ENCODE measurements at regions of chr7 and their contacts with region 1.

Region 1: DNA sequence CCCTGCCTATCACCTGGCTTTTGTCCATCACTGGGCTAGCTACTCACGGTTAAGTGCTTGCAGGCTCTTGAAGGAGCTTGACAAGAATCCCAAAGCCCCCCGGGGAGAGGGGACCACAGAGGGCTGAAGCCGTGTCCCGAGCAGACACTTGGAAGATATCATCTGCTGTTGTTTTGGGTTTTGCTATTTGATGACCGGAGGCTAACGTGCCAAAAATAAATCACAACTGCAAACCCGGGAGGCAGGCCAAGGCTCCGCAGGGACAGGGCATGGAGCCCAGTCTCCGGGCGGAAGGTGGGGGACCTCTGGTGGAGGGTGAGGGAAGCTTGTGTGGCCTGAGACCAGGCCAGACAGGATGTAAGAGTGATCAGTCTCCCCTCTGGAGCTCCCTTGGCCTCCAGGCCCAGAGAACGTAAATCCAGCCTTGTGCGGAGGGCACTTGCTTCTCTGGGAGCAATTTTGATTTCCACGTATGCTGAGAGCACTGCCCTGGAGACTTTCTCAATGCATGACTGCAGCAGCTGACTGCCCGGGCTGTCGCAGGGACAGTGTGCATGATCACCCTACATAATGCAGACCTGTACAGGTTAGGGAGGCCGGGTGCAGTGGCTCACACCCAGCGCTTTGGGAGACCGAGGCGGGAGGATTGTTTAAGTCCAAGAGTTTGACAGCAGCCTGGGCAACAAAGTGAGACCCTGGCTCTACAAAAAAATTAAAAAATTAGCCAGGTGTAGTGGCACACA is at the start of gene PHKG1:
- DNase-seq: peak; percentile 80
- H3K4me3 ChIP-seq: no peak within 1 kb of the TSS
- H3K27ac ChIP-seq: no peak within 1 kb of the TSS
- H3K4me1 ChIP-seq: peaks cover 3% of the 10 kb centered on the region
- H3K27me3 ChIP-seq: no peaks in the 10 kb centered on the region
- CTCF ChIP-seq: peak; percentile 36 to 74
- POLR2A ChIP-seq: no peak
- total RNA-seq, gene PHKG1: 0.72 and 1.00 TPM in 2 replicates

Region 2: DNA sequence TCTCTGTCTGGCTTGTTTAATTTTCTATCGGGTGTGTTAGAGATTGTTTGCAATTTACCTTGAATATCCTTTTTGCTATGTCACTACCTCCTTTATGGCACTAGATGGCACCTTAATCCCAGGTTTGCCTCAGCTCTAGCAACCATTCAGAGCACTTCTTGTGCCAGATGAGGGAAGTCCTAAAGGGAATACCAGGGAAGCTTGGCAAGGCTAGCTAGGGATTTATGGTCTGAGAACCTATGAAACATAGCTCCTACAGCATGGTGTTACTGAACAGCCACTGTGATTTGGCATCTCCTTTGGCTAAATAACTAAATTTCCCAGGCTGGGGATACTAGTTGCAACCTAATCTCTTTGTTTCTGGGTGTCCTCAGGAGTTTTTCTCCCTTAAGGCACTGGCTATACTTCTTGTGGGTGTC is 451.7 kb before region 1 on chr7:
- CTCF ChIA-PET with region 1: interaction called, 30 read pairs
- POLR2A ChIA-PET with region 1: no interaction called
- dilution Hi-C with region 1: no loop called
- intact Hi-C with region 1: no loop called
- DNase-seq: peak; percentile 83
- H3K4me3 ChIP-seq: no peak overlapping the region
- H3K27ac ChIP-seq: no peak overlapping the region
- H3K4me1 ChIP-seq: peaks cover 6% of the 10 kb centered on the region
- H3K27me3 ChIP-seq: peaks cover 0 to 3% of the 10 kb centered on the region in 2 experiments
- CTCF ChIP-seq: peak; percentile 53 to 63
- POLR2A ChIP-seq: no peak

Region 3: DNA sequence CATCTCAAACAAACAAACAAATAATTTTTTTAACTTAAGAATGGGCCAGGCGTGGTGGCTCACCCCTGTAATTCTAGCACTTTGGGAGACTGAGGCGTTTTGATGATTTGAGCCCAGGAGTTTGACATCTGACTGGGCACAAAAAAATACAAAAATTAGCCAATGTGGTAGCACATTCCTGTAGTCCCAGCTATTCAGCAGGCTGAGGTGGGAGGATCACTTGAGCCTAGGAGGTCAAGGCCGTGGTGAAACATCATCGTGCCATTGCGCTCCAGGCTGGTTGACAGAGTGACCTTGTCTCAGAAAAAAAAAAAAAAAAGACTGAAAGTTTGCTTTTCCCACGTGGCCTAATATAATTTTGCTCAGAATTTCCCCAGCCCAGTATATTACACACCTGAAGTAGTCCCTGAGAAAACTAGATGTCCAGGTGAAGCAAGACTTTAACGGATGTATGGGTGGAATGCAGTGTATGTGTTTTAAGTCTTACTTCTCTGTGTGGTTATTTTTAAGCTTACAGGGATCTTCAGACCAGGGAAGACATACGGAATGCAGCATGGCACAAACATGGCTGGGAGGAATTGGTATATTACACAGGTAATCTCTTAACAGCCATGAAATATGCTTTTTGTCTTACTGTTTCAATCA is 96.0 kb before region 1 on chr7:
- CTCF ChIA-PET with region 1: interaction called, 11 read pairs
- POLR2A ChIA-PET with region 1: no interaction called
- dilution Hi-C with region 1: no loop called
- intact Hi-C with region 1: no loop called
- DNase-seq: no peak
- H3K4me3 ChIP-seq: no peak overlapping the region
- H3K27ac ChIP-seq: no peak overlapping the region
- H3K4me1 ChIP-seq: peaks cover 10% of the 10 kb centered on the region
- H3K27me3 ChIP-seq: no peaks in the 10 kb centered on the region
- CTCF ChIP-seq: no peak
- POLR2A ChIP-seq: no peak

Region 4: GRCh38 chr7:56009695-56010094 is 83.3 kb before region 1 on chr7:
- CTCF ChIA-PET with region 1: interaction called, 32 read pairs
- POLR2A ChIA-PET with region 1: no interaction called
- dilution Hi-C with region 1: no loop called
- intact Hi-C with region 1: loop called (anchors 1 kb)
- DNase-seq: no peak
- H3K4me3 ChIP-seq: no peak overlapping the region
- H3K27ac ChIP-seq: no peak overlapping the region
- H3K4me1 ChIP-seq: no peaks in the 10 kb centered on the region
- H3K27me3 ChIP-seq: no peaks in the 10 kb centered on the region
- CTCF ChIP-seq: no peak
- POLR2A ChIP-seq: no peak

Region 5: GRCh38 chr7:56079450-56080185 is 13.3 kb before region 1 on chr7:
- CTCF ChIA-PET with region 1: interaction called, 49 read pairs
- POLR2A ChIA-PET with region 1: interaction called, 4 read pairs
- dilution Hi-C with region 1: no loop called
- intact Hi-C with region 1: loop called (anchors 2 kb)
- DNase-seq: peak; percentile 93
- H3K4me3 ChIP-seq: no peak overlapping the region
- H3K27ac ChIP-seq: peak overlapping the region; percentile 73
- H3K4me1 ChIP-seq: peaks cover 26% of the 10 kb centered on the region
- H3K27me3 ChIP-seq: no peaks in the 10 kb centered on the region
- CTCF ChIP-seq: peak; percentile 89 to 92
- POLR2A ChIP-seq: no peak

Region 6: GRCh38 chr7:56106108-56107073 is 13.4 kb after region 1 on chr7 and contains the start of gene CHCHD2:
- CTCF ChIA-PET with region 1: interaction called, 19 read pairs
- POLR2A ChIA-PET with region 1: interaction called, 7 read pairs
- dilution Hi-C with region 1: no loop called
- intact Hi-C with region 1: no loop called
- DNase-seq: peak; percentile 98
- H3K4me3 ChIP-seq: peak within 1 kb of the TSS; percentile 54 to 87 (median 86)
- H3K27ac ChIP-seq: peak within 1 kb of the TSS; percentile 77
- H3K4me1 ChIP-seq: peaks cover 4% of the 10 kb centered on the region
- H3K27me3 ChIP-seq: no peaks in the 10 kb centered on the region
- CTCF ChIP-seq: no peak
- POLR2A ChIP-seq: peak; percentile 70
- total RNA-seq, gene CHCHD2: 368 and 378 TPM in 2 replicates